Gastrocnemius medialis (tissue), 4 donors: ENCODE measurements at regions of chr2 and their contacts with region 1.

Region 1: GRCh38 chr2:36355151-36355889 is at the start of gene CRIM1:
- DNase-seq: peak; percentile 84 to 85
- ATAC-seq: peak; percentile 61 to 69
- H3K4me3 ChIP-seq: peak within 1 kb of the TSS; percentile 82 to 95 (median 90)
- H3K27ac ChIP-seq: peak within 1 kb of the TSS; percentile 81 to 97 (median 84)
- H3K4me1 ChIP-seq: peaks cover 29% of the 10 kb centered on the region in 2 donors
- H3K27me3 ChIP-seq: no peaks in the 10 kb centered on the region
- CTCF ChIP-seq: no peak
- POLR2A ChIP-seq: peak; percentile 92 to 98
- total RNA-seq, gene CRIM1: 93.2 to 194 (median 119) TPM

Region 2: GRCh38 chr2:36459725-36460137 is 104.4 kb after region 1 on chr2:
- in situ Hi-C with region 1: no loop called
- intact Hi-C with region 1: loop called (anchors 5 kb)
- DNase-seq: no peak
- ATAC-seq: peak in 1 of 2 donors; percentile 30
- H3K4me3 ChIP-seq: no peak overlapping the region
- H3K27ac ChIP-seq: peak overlapping the region in 3 of 4 donors; percentile 42 to 57 (median 55)
- H3K4me1 ChIP-seq: peaks cover 46 to 55% of the 10 kb centered on the region in 2 donors
- H3K27me3 ChIP-seq: no peaks in the 10 kb centered on the region
- CTCF ChIP-seq: peak in 3 of 5 experiments; percentile 11 to 45 (median 40)
- POLR2A ChIP-seq: no peak

Region 3: GRCh38 chr2:36507408-36507812 is 152.1 kb after region 1 on chr2:
- in situ Hi-C with region 1: loop called (anchors 10 kb)
- intact Hi-C with region 1: loop called (anchors 2 kb)
- DNase-seq: no peak
- ATAC-seq: peak; percentile 74 to 75
- H3K4me3 ChIP-seq: no peak overlapping the region
- H3K27ac ChIP-seq: no peak overlapping the region
- H3K4me1 ChIP-seq: peaks cover 0 to 8% of the 10 kb centered on the region in 2 donors
- H3K27me3 ChIP-seq: no peaks in the 10 kb centered on the region
- CTCF ChIP-seq: peak; percentile 30 to 74 (median 41)
- POLR2A ChIP-seq: no peak

Region 4: DNA sequence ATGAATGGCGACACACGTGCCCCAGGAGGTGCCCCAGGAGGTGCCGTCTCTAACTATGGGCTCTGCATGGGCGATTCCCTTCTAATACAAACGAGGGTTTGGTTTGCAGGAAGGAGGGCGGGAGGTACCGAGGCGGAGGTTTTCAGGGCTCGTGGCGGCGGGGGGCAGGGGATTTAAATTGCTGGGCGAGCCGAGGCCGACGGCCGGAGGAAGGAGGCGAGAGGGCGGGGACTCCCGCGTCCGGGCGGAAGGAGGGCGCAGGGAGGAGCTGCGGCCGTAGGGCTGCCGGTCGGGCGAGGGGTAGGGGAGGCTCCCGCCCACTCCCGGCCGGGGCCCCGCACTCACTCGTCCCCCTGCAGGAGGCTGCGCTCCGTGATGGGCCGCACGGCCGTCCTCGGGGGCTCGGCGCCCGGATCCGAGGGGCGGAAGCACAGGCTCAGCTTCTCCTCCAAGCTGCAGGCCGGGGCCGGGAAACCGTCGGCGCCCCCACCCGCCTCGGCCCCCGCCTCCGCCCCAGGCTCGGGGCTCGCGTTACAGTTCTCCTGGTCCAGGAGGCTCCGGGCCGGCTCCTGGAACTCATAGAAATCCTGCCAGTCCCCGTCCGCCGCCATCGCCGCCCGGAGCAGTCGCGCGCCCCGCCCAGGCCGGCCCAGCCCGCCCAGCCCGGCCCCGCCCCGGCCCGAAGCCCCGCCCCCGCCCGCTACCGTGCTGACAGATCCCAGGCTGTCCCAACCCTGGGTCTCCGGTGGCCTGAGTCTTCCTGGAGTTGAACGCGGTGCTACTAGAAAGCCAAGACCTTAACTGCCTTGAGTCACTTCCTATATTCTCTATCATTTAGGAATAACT is 242.4 kb after region 1 on chr2 and contains the start of gene FEZ2:
- in situ Hi-C with region 1: no loop called
- intact Hi-C with region 1: loop called (anchors 2 kb)
- DNase-seq: peak; percentile 64 to 82
- ATAC-seq: peak; percentile 89 to 91
- H3K4me3 ChIP-seq: peak within 1 kb of the TSS; percentile 78 to 93 (median 85)
- H3K27ac ChIP-seq: peak within 1 kb of the TSS; percentile 92 to 97 (median 94)
- H3K4me1 ChIP-seq: peaks cover 31 to 42% of the 10 kb centered on the region in 2 donors
- H3K27me3 ChIP-seq: no peaks in the 10 kb centered on the region
- CTCF ChIP-seq: no peak
- POLR2A ChIP-seq: peak in 1 of 2 donors; percentile 37
- total RNA-seq, gene FEZ2: 65.1 to 126 (median 110) TPM

Region 5: DNA sequence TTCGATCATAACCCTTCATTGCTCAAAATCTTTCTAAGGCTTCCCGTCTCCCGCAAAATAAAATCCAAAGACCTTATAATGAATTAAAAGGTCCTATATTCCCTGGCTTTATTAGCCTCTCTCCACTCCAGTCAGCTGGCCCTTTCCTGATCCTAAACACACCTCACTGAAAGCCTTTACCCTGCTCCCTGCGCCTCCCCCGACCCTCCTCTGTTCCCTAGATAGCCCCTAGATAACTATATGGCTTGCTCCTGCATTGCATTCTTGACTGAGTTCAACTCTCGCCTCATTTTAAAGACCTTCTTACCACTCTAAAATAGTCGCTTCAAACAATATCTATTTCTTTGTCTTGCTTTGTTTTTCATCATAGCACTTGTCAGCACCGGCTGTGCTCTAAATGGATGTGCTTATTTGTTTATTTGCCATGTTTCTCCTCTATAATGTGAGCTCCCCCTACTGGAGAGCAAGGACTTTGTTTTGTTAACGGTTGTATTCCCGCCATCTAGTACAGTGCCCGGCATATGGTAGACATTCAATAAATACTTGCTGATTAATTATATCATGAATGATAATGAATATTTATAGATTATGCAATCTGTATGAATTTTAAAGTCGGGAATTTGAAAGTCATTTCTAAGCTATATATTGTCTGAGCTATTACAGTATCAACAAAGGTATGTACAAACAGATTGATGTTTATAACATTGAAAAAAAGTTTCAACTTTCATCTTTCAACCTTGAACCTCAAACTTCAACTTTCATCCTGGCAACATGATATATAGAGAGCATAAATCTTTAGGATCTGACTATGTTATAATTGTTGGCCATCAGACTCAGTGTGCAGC is 308.8 kb after region 1 on chr2:
- in situ Hi-C with region 1: loop called in 3 of 4 experiments (anchors 5 kb)
- intact Hi-C with region 1: loop called (anchors 1 kb)
- DNase-seq: peak; percentile 12 to 27
- ATAC-seq: peak; percentile 82 to 84
- H3K4me3 ChIP-seq: no peak overlapping the region
- H3K27ac ChIP-seq: peak overlapping the region; percentile 9 to 65 (median 18)
- H3K4me1 ChIP-seq: peaks cover 18 to 21% of the 10 kb centered on the region in 2 donors
- H3K27me3 ChIP-seq: no peaks in the 10 kb centered on the region
- CTCF ChIP-seq: peak; percentile 71 to 80 (median 76)
- POLR2A ChIP-seq: no peak

Region 6: DNA sequence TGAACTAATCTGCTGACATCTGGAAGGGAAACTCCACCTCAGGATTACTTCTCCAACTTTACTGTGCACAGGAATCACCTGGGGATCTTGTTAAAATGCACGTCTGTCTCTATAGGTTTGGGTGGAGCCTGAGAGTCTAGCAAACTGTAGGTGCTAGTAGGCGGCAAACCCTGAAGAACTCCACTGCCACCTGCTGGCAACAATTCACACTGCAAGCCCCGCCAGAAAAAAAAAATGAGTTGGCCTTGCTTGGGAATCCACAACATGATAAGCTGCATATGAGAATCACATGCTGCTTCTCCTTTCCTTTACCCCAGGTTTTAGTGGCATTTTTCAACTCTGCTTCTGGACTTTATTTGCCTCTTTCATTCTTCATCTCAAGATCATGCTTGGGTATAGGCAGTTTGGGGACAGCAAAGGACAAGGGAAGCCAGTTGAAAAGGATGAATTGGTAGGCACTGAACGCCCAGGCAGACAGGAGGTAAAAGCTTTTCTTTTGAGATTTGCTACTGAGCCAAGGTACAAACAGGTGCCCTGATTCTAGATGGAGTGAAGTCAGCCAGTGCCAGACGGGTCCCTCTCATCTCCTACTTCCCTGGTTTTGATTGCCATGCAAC is 430.0 kb after region 1 on chr2:
- in situ Hi-C with region 1: no loop called
- intact Hi-C with region 1: loop called (anchors 5 kb)
- DNase-seq: peak in 1 of 2 donors; percentile 32
- ATAC-seq: peak in 1 of 2 donors; percentile 69
- H3K4me3 ChIP-seq: no peak overlapping the region
- H3K27ac ChIP-seq: no peak overlapping the region
- H3K4me1 ChIP-seq: no peaks in the 10 kb centered on the region
- H3K27me3 ChIP-seq: no peaks in the 10 kb centered on the region
- CTCF ChIP-seq: peak; percentile 72 to 95 (median 84)
- POLR2A ChIP-seq: no peak

Region 7: GRCh38 chr2:36966370-36967235 is 611.3 kb after region 1 on chr2 and contains the start of gene STRN:
- in situ Hi-C with region 1: no loop called
- intact Hi-C with region 1: loop called (anchors 5 kb)
- DNase-seq: peak; percentile 90 to 96
- ATAC-seq: peak; percentile 88 to 91
- H3K4me3 ChIP-seq: peak within 1 kb of the TSS; percentile 70 to 97 (median 88)
- H3K27ac ChIP-seq: peak within 1 kb of the TSS; percentile 81 to 97 (median 90)
- H3K4me1 ChIP-seq: peaks cover 28% of the 10 kb centered on the region in 2 donors
- H3K27me3 ChIP-seq: no peaks in the 10 kb centered on the region
- CTCF ChIP-seq: peak in 1 of 5 experiments; percentile 32
- POLR2A ChIP-seq: peak; percentile 94 to 98
- total RNA-seq, gene STRN: 21.3 to 52.0 (median 38.5) TPM